PC-9 (cell line): ENCODE measurements at regions of chr14 and their contacts with region 1.

Region 1: DNA sequence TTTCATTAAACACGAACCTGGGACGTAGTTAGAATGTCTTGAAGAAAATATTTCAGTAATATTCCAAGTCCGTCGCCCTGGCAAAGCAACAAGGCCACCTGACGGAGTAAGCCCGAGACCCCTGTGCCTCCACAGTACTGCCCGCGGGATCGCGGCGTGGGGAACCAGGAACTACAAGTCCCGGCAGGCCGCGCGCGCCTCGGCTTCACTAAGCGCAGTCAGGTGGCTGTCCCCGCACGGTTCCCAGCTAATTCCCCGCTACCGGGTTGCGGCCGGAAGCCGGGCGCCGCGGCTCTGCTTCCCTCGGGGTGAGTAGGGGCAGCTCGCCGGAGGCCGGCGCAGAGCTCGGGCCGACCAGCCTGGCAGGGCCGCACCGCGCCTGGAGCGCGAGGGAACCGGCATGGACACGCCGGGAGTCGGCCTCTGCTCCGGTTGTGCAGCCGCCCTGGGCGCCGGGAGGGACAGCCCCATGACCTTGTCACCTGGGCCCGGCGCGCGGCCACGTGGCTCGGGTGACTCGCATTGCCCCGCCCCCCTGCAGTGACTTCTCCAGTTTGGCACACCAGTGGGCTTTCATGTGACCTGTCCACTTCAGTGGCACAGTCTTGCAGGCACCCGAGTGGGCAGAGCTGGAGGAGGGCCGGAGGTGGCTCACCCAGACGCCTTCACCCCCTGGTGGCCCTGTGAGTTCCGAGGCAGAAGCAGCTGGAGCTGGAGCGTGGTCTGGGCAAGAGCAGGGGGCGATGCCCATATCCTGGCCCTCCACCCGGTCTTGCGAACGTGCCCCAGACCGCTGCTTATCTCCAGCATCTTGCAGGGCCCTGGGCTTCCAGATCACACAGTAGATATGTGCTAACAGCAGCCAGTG is at the start of gene ADCK1:
- DNase-seq: peak; percentile 75 to 95
- H3K4me3 ChIP-seq: peak within 1 kb of the TSS; percentile 88
- H3K27ac ChIP-seq: peak within 1 kb of the TSS; percentile 58
- H3K4me1 ChIP-seq: peaks cover 21% of the 10 kb centered on the region
- H3K27me3 ChIP-seq: no peaks in the 10 kb centered on the region
- CTCF ChIP-seq: peak; percentile 55; the same call in 1 of the 2 replicates
- total RNA-seq, gene ADCK1: 19.0 and 26.3 TPM in 2 replicates

Region 2: DNA sequence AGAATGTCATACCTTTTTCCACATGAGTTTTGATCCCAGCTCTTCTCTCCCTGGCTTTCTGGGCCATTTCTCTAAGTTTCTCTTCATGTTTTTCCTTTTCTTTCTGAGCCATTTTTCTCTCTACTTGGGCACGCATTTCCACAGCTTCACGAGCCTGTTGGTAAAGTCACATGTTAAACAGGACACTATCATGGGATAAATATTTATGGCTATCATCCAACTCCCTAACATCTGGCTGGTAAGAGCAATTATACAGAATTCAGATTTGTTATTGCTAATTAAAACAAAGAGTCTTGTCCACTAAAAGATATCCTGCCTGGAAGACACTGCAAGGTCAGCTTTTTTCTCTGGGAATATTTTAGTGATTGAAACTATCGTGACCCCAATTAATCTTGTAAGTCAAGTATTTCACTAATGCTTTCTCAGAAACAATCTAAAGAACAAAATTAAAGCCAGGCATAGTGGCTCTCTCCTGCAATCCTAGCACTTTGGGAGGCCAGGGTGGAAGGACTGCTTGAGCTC is 69.1 kb before region 1 on chr14:
- CTCF ChIA-PET with region 1: interaction called, 14 read pairs
- POLR2A ChIA-PET with region 1: no interaction called
- intact Hi-C with region 1: no loop called
- DNase-seq: no peak
- H3K4me3 ChIP-seq: no peak overlapping the region
- H3K27ac ChIP-seq: no peak overlapping the region
- H3K4me1 ChIP-seq: no peaks in the 10 kb centered on the region
- H3K27me3 ChIP-seq: no peaks in the 10 kb centered on the region
- CTCF ChIP-seq: no peak